Activated CD4-positive, alpha-beta T cell treated with anti-CD3 and anti-CD28 coated beads, Interleukin-2, amount 10 ng/mL, durations not matched to agents 24 days and 14 days (primary cell): ENCODE measurements at regions of chr4 and their contacts with region 1.

Region 1: GRCh38 chr4:40672536-40673526 is 43.2 kb upstream of the RBM47 start:
- DNase-seq: peak; percentile 87
- H3K4me3 Mint-ChIP-seq: peak overlapping the region; percentile 69
- H3K27ac Mint-ChIP-seq: peak overlapping the region; percentile 93
- H3K4me1 Mint-ChIP-seq: peaks cover 57% of the 10 kb centered on the region
- H3K27me3 Mint-ChIP-seq: no peaks in the 10 kb centered on the region

Region 2: DNA sequence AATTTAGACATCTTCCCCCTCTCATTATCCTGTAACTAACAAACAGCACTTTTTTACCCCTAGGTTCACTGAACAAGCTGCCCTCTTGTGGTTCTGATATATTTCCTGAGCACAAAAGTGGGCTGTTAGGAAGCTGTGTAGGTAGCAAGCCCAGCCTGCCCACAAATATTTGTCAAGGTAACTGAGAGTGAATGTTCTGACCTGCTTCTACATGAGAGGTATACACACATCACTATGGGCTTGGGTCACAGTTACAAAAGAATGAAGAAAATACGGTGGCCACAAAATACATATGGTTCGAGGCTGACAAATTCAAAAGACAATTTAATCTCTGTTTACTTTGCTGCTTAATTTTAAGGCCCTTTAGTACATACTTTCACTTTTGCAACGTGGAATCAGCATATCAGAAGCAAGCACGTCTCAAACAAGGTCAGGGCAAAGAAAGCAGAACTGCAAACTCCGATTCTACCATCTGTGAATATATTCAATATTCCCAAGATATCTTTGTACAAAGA is 121.8 kb before region 1 on chr4:
- intact Hi-C with region 1: loop called (anchors 2 kb)
- DNase-seq: peak; percentile 82
- H3K4me3 Mint-ChIP-seq: peak overlapping the region; percentile 84
- H3K27ac Mint-ChIP-seq: peak overlapping the region; percentile 84
- H3K4me1 Mint-ChIP-seq: peaks cover 40% of the 10 kb centered on the region
- H3K27me3 Mint-ChIP-seq: no peaks in the 10 kb centered on the region

Region 3: GRCh38 chr4:40629401-40630334 is 43.2 kb before region 1 on chr4 and contains the start of gene RBM47:
- intact Hi-C with region 1: loop called (anchors 1 kb)
- DNase-seq: peak; percentile 73
- H3K4me3 Mint-ChIP-seq: peak within 1 kb of the TSS; percentile 89
- H3K27ac Mint-ChIP-seq: peak within 1 kb of the TSS; percentile 64
- H3K4me1 Mint-ChIP-seq: peaks cover 34% of the 10 kb centered on the region
- H3K27me3 Mint-ChIP-seq: peaks cover 20% of the 10 kb centered on the region
- total RNA-seq, gene RBM47: 10.7 and 13.0 TPM in 2 replicates

Region 4: GRCh38 chr4:40699648-40700047 is 26.8 kb after region 1 on chr4:
- intact Hi-C with region 1: loop called (anchors 1 kb)
- DNase-seq: no peak
- H3K4me3 Mint-ChIP-seq: peak overlapping the region; percentile 4
- H3K27ac Mint-ChIP-seq: peak overlapping the region; percentile 67
- H3K4me1 Mint-ChIP-seq: peaks cover 26% of the 10 kb centered on the region
- H3K27me3 Mint-ChIP-seq: no peaks in the 10 kb centered on the region

Region 5: GRCh38 chr4:40908702-40909362 is 236.0 kb after region 1 on chr4:
- intact Hi-C with region 1: loop called (anchors 2 kb)
- DNase-seq: peak; percentile 90
- H3K4me3 Mint-ChIP-seq: peak overlapping the region; percentile 49
- H3K27ac Mint-ChIP-seq: peak overlapping the region; percentile 91
- H3K4me1 Mint-ChIP-seq: peaks cover 26% of the 10 kb centered on the region
- H3K27me3 Mint-ChIP-seq: no peaks in the 10 kb centered on the region